Activated CD4-positive, alpha-beta T cell treated with anti-CD3 and anti-CD28 coated beads for 36 hours (primary cell): ENCODE measurements at regions of chr7 and their contacts with region 1.

Region 1: GRCh38 chr7:584122-584465 is 64.4 kb upstream of the PDGFA start:
- DNase-seq: peak; percentile 95
- ATAC-seq: peak; percentile 90
- H3K4me3 Mint-ChIP-seq: peak overlapping the region; percentile 77
- H3K27ac Mint-ChIP-seq: peak overlapping the region; percentile 96
- H3K4me1 Mint-ChIP-seq: peaks cover 37% of the 10 kb centered on the region
- H3K27me3 Mint-ChIP-seq: no peaks in the 10 kb centered on the region

Region 2: DNA sequence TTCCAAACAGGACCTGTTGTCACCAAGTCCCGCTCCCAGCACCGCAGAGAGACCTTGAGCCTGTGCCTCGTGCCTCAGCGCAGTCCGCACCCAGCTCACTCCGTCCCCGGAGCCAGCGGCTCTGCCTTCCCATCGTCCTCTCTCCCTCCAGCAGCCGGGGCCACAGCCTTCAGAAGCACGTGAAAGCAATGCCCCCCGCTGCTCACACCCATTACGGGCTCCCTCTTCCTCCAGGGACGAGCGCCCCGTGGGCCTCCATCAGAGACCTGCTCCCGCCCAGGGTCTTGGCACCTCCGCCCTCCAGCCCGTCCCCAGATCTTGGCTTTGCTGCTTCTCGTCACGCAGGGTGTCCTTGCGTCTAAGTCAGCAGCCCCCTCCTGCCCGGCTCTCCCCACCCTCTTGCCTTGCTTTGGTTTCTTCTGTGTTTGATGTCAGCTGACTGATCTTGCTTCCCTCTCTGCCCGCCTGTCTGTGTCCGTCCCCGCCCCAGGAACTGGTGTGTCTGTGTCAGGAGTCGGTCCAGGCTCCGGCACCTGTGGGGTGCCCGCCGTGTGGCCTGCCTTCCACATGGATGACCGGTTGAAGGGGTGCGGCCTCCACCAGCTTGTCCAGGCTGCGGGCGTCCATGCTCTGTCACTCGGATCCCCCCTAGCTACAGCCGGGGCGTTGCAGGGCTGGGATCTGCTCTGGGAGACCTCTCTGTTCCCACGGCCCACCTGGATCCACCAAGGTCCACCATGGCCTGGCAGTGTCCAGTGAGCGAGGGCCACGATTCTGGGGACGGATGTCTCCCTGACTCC is 232.2 kb before region 1 on chr7:
- CTCF ChIA-PET with region 1: no interaction called
- POLR2A ChIA-PET with region 1: no interaction called
- intact Hi-C with region 1: loop called in 1 of 2 experiments (anchors 1 kb)
- DNase-seq: peak; percentile 69
- ATAC-seq: peak; percentile 71
- H3K4me3 Mint-ChIP-seq: no peak overlapping the region
- H3K27ac Mint-ChIP-seq: no peak overlapping the region
- H3K4me1 Mint-ChIP-seq: peaks cover 12% of the 10 kb centered on the region
- H3K27me3 Mint-ChIP-seq: no peaks in the 10 kb centered on the region

Region 3: DNA sequence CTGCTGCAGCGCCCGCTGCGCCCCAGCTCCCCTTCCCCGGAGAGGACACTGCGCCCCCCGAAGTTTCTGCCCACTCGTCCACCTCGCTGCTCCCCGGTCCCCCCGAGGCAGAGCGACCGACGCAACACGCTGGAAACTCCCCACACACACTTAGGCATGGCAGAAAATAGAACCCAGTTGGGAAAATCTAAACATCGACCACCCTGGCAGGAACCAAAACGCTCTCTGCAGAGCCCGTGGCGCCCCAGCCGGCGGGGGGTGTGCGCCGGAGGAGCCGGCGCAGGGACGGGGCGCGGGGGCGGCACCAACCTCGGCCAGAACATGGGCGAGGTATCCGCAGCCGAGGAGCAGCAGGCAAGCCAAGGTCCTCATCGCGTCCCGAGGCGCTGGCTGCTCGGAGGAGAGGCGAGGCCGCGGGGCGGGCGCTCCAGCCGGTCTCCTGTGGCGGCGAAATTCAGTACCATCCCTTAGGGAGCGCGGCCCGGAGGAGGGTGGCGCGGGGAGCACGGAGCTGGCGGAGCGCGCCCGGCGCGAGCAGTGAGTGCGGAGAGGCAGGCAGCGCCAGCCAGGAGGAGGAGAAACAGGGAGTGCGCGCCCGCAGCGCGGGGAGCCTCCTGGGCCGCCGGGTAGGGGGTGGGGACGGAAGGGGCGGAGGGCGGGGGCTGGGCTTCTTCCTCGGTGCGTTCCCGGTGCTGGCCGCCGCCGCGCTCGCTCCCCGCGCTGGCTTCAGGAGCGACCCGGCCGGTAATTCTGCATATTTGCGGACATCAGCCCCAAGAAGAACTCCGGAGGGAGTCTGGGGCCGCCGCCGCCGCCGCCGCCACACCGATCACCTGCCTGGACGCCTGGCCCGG is 65.2 kb before region 1 on chr7:
- CTCF ChIA-PET with region 1: no interaction called
- POLR2A ChIA-PET with region 1: no interaction called
- intact Hi-C with region 1: loop called in 1 of 2 experiments (anchors 2 kb)
- DNase-seq: peak; percentile 75
- ATAC-seq: peak; percentile 42
- H3K4me3 Mint-ChIP-seq: peak overlapping the region; percentile 73
- H3K27ac Mint-ChIP-seq: no peak overlapping the region
- H3K4me1 Mint-ChIP-seq: peaks cover 16% of the 10 kb centered on the region
- H3K27me3 Mint-ChIP-seq: peaks cover 37% of the 10 kb centered on the region

Region 4: DNA sequence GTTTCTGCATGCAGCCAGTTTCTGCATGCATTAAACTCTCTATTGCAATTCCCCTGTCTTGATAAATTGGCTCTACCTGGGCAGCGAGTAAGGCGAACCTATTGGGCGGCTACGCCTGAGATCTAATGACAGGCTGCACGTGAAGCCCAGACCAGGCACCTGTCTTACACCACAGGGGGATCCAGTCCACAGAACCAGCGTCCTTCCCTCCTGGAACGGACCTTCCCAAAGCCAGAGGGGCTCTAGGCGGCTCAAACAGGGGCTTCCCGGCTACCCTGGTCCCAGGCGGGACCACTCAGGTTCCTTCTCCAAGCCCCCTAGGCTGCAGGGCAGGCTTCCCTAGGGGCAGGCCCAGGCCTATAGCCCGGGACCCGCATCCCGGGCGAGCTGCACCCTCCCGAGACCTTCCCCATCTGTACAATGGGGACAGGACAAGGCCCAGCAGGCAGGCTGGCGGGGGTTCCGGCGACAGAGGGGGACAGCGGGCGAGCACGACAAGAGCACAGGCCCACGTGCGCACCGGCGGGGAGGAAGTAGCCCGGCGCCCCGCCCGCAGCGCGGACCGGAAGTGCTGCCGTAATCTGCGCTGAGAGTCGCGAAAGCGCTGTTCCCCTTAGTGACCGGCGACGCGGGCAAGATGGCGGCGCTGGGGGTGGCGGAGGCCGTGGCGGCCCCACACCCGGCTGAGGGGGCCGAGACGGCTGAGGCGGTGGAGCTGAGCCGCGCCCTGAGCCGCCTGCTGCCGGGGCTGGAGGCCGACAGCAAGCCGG is 142.2 kb after region 1 on chr7 and contains the start of gene DNAAF5:
- CTCF ChIA-PET with region 1: no interaction called
- POLR2A ChIA-PET with region 1: no interaction called
- intact Hi-C with region 1: loop called (anchors 1 kb)
- DNase-seq: peak; percentile 93
- ATAC-seq: peak; percentile 89
- H3K4me3 Mint-ChIP-seq: peak within 1 kb of the TSS; percentile 83
- H3K27ac Mint-ChIP-seq: peak within 1 kb of the TSS; percentile 90
- H3K4me1 Mint-ChIP-seq: peaks cover 26% of the 10 kb centered on the region
- H3K27me3 Mint-ChIP-seq: no peaks in the 10 kb centered on the region
- total RNA-seq, gene DNAAF5: 31.5 to 37.2 TPM